H1 (cell line): ENCODE measurements at regions of chr7 and their contacts with region 1.

Region 1: DNA sequence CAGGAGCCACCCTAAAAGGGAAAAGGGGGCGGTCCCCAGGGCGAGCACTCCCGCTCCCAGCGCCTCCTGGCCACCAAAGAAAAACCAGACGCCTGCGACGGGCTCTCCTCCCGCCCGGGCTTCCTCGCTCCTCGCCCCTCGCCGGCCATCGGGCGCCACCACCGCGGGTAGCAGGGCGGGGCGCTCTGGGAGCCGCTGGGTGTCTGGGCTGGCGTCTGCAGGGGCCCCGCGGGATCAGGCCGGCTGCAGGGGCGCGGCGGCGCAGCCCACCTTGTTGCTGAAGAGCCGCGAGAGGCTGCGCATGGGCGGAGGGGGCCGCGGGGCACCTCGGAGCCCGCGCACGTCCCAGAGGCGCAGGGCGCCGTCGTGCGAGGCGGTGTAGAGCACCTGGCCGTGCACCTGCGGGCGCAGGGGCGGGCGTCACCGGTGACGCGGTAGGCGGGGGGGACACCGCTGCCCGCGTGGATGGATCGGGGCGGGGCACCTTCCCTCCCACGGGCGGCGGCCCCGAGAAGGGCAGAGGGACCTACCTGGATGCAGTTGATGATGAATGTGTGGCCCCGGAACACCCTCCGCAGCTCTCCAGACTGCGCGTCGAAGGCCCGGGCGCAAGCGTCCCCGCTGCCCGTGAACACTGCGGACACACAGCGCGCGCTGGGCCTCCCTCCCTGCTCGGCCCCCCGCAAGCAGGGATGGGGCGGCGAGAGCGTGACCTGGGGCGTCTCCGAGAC is 28.3 kb downstream of the WDR86 start:
- DNase-seq: peak in 1 of 2 experiments; percentile 84
- H3K4me3 ChIP-seq: peak overlapping the region; percentile 25 to 57 (median 38)
- H3K27ac ChIP-seq: no peak overlapping the region
- H3K4me1 ChIP-seq: peaks cover 0 to 30% (median 8%) of the 10 kb centered on the region in 4 experiments; a peak in 6 of 7 replicates
- H3K27me3 ChIP-seq: peaks cover 8 to 27% (median 22%) of the 10 kb centered on the region in 4 experiments
- CTCF ChIP-seq: no peak
- EP300 ChIP-seq: no peak
- POLR2A ChIP-seq: no peak
- RAD21 ChIP-seq: no peak; a peak in 1 of 4 replicates

Region 2: GRCh38 chr7:151207315-151207714 is 174.2 kb before region 1 on chr7:
- CTCF ChIA-PET with region 1: no interaction called
- POLR2A ChIA-PET with region 1: no interaction called
- DNase-seq: no peak
- H3K4me3 ChIP-seq: no peak overlapping the region
- H3K27ac ChIP-seq: no peak overlapping the region
- H3K4me1 ChIP-seq: peaks cover 0 to 6% (median 3%) of the 10 kb centered on the region in 4 experiments; a peak in 4 of 7 replicates
- H3K27me3 ChIP-seq: peaks cover 0 to 3% (median 0%) of the 10 kb centered on the region in 4 experiments; a peak in 2 of 7 replicates
- CTCF ChIP-seq: no peak
- EP300 ChIP-seq: no peak
- POLR2A ChIP-seq: no peak
- RAD21 ChIP-seq: no peak

Region 3: DNA sequence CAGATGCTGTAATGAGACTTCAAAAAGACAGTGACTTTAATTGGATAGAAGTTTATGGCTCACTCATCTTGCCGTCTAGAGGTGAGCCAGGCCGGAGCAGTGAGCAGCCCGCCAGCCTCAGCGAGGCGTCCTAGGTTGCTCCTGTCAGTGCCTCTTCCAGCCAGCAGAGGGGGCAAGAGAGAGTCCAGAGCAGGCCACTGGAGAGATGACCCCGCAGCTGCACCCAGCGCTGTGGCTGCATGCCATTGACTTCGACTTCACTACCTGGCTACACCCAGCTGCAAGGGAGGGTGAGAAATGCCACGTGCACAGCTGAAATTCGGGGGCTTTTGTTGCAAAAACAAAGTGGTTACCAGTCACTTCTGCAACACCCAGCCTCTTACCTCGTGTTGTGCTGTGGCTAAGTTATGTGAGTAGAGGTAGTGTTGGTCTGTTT is 13.4 kb before region 1 on chr7:
- CTCF ChIA-PET with region 1: interaction called, 23 read pairs
- POLR2A ChIA-PET with region 1: interaction called, 4 read pairs
- DNase-seq: peak; percentile 58 to 91
- H3K4me3 ChIP-seq: no peak overlapping the region
- H3K27ac ChIP-seq: no peak overlapping the region
- H3K4me1 ChIP-seq: peaks cover 0 to 7% (median 2%) of the 10 kb centered on the region in 4 experiments; a peak in 3 of 7 replicates
- H3K27me3 ChIP-seq: no peaks in the 10 kb centered on the region; a peak in 1 of 7 replicates
- CTCF ChIP-seq: peak; percentile 95 to 100 (median 95)
- EP300 ChIP-seq: no peak
- POLR2A ChIP-seq: no peak
- RAD21 ChIP-seq: peak; percentile 86 to 90